MCF 10A (cell line): ENCODE measurements at regions of chr2 and their contacts with region 1.

Region 1: GRCh38 chr2:233443468-233444183 is 89.3 kb downstream of the DGKD start:
- DNase-seq: peak; percentile 85
- H3K4me3 Mint-ChIP-seq: no peak overlapping the region
- H3K27ac Mint-ChIP-seq: peak overlapping the region; percentile 33
- H3K4me1 Mint-ChIP-seq: peaks cover 5% of the 10 kb centered on the region
- H3K27me3 Mint-ChIP-seq: no peaks in the 10 kb centered on the region
- CTCF ChIP-seq: peak; percentile 77

Region 2: GRCh38 chr2:233223059-233223894 is 220.3 kb before region 1 on chr2:
- CTCF ChIA-PET with region 1: no interaction called
- POLR2A ChIA-PET with region 1: no interaction called
- intact Hi-C with region 1: no loop called
- DNase-seq: no peak
- H3K4me3 Mint-ChIP-seq: no peak overlapping the region
- H3K27ac Mint-ChIP-seq: no peak overlapping the region
- H3K4me1 Mint-ChIP-seq: no peaks in the 10 kb centered on the region
- H3K27me3 Mint-ChIP-seq: peaks cover 9% of the 10 kb centered on the region
- CTCF ChIP-seq: no peak

Region 3: GRCh38 chr2:233289648-233290047 is 154.0 kb before region 1 on chr2:
- CTCF ChIA-PET with region 1: interaction called, 5 read pairs
- POLR2A ChIA-PET with region 1: no interaction called
- intact Hi-C with region 1: loop called (anchors 5 kb)
- DNase-seq: no peak
- H3K4me3 Mint-ChIP-seq: no peak overlapping the region
- H3K27ac Mint-ChIP-seq: peak overlapping the region; percentile 39
- H3K4me1 Mint-ChIP-seq: no peaks in the 10 kb centered on the region
- H3K27me3 Mint-ChIP-seq: no peaks in the 10 kb centered on the region
- CTCF ChIP-seq: no peak

Region 4: DNA sequence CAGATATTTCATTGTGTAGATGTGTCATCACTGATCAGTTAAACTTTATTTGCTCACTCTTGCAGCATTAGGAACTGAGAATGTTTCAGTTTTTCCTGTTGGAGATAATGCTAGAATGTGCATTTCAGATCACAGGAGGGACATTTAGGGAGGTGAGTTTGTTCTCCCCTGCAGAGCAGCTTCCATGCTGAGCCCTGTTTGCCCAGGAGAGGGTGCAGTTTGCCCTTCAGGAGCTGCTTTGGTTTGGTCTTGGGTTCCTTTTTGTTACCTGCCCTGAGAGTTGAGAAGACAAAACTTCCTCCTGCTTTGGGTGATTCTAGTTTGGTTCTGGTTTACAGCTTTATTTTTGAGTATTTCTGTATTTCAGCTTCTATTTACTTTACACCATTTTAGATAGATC is 39.4 kb before region 1 on chr2:
- CTCF ChIA-PET with region 1: interaction called, 223 read pairs
- POLR2A ChIA-PET with region 1: interaction called, 15 read pairs
- intact Hi-C with region 1: loop called (anchors 1 kb)
- DNase-seq: peak; percentile 76
- H3K4me3 Mint-ChIP-seq: no peak overlapping the region
- H3K27ac Mint-ChIP-seq: no peak overlapping the region
- H3K4me1 Mint-ChIP-seq: peaks cover 5% of the 10 kb centered on the region
- H3K27me3 Mint-ChIP-seq: no peaks in the 10 kb centered on the region
- CTCF ChIP-seq: peak; percentile 75

Region 5: GRCh38 chr2:233418761-233419625 is 24.6 kb before region 1 on chr2:
- CTCF ChIA-PET with region 1: interaction called, 48 read pairs
- POLR2A ChIA-PET with region 1: interaction called, 17 read pairs
- intact Hi-C with region 1: no loop called
- DNase-seq: peak; percentile 79
- H3K4me3 Mint-ChIP-seq: peak overlapping the region; percentile 28
- H3K27ac Mint-ChIP-seq: peak overlapping the region; percentile 92
- H3K4me1 Mint-ChIP-seq: peaks cover 60% of the 10 kb centered on the region
- H3K27me3 Mint-ChIP-seq: no peaks in the 10 kb centered on the region
- CTCF ChIP-seq: no peak

Region 6: GRCh38 chr2:233912691-233913423 is 469.2 kb after region 1 on chr2:
- CTCF ChIA-PET with region 1: interaction called, 9 read pairs
- POLR2A ChIA-PET with region 1: no interaction called
- intact Hi-C with region 1: loop called (anchors 10 kb)
- DNase-seq: peak; percentile 42
- H3K4me3 Mint-ChIP-seq: no peak overlapping the region
- H3K27ac Mint-ChIP-seq: no peak overlapping the region
- H3K4me1 Mint-ChIP-seq: no peaks in the 10 kb centered on the region
- H3K27me3 Mint-ChIP-seq: peaks cover 61% of the 10 kb centered on the region
- CTCF ChIP-seq: no peak